MCF 10A (cell line): ENCODE measurements at regions of chr12 and their contacts with region 1.

Region 1: DNA sequence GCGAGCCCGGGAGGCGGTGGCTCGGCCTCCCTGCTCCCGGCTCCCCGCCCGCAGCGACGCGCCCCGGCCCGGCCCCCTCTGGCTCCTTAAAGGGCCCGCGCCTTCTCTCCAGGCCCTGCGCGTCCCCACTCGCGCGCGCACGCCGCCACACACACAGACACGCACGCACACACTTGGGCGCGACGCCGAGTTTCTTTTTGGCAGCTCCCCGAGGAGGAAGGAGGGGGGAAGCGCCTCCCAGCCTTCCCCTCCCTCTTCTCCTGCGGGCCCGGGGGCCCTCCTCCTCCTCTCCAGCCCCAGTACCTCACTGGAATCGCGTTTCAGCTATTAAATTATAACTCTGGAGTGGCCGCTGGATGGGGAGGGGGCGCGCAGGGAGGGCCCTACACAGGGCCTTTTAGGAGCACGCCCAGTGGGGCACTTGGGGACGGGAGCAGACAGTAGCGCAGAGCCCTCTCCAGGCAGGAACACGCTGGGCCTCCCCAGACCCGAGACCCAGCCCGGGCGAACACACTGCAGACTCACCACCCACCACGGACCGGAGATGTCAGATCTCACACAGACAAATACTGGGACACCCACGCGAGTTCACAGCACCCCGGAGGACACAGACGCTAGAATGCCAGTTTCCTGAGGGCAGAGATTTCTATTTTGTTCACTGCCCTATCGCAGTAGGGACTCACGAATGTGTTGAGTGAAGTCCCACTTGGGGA is 405 bp upstream of the NCOR2 start:
- DNase-seq: peak; percentile 79
- H3K4me3 Mint-ChIP-seq: peak overlapping the region; percentile 72
- H3K27ac Mint-ChIP-seq: no peak overlapping the region
- H3K4me1 Mint-ChIP-seq: peaks cover 6% of the 10 kb centered on the region
- H3K27me3 Mint-ChIP-seq: no peaks in the 10 kb centered on the region
- CTCF ChIP-seq: no peak

Region 2: DNA sequence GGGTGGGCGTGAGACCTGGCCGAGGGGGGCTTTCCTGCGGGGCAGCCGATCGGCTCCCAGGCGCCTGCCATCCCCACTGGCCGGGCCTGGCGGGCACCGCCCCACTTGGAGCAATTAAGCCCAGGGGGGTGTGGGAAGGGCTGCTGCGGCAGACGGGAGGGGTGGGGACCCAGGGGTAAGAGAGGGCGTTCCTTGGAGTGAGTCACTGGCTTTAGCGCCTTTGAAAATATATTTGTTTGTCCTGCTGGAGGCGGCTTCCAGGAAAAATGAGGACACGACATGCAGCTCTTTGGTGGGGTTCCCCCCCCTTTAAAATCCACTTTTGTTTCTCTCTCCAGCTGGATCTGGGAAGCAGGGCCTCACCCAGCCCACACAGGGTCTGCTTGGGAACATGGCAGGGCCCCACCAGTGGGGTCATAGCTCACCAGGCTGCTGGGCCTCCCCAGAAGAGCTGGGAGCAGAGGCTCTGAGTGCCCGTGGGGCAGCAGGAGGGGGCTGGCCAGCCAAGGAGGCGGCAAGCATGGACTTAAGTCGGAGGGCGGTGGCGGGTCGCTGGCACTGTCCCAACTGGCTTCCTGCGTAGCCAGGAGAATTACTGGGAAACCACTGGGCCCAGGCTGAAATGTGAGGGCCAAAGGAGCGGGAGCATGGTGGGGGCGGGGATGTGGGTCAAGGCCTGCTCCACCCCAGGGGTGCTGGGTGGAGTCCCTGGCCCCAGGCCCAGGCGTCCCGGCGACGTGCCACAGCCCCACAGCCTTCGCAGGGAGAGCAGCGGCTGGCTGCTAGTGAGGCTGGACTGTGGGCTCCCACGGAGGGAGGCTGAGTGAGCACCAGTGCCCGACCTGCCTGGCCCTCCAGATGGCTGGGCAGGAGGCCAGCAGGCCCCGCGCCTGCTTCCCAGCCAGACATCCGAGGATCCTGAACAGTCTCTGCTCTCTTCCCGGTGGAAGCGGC is 145.0 kb before region 1 on chr12:
- CTCF ChIA-PET with region 1: no interaction called
- POLR2A ChIA-PET with region 1: no interaction called
- intact Hi-C with region 1: loop called (anchors 1 kb)
- DNase-seq: peak; percentile 92
- H3K4me3 Mint-ChIP-seq: peak overlapping the region; percentile 48
- H3K27ac Mint-ChIP-seq: peak overlapping the region; percentile 49
- H3K4me1 Mint-ChIP-seq: peaks cover 18% of the 10 kb centered on the region
- H3K27me3 Mint-ChIP-seq: no peaks in the 10 kb centered on the region
- CTCF ChIP-seq: no peak

Region 3: GRCh38 chr12:124480469-124481256 is 87.2 kb before region 1 on chr12:
- CTCF ChIA-PET with region 1: no interaction called
- POLR2A ChIA-PET with region 1: no interaction called
- intact Hi-C with region 1: no loop called
- DNase-seq: peak; percentile 84
- H3K4me3 Mint-ChIP-seq: peak overlapping the region; percentile 8
- H3K27ac Mint-ChIP-seq: no peak overlapping the region
- H3K4me1 Mint-ChIP-seq: peaks cover 24% of the 10 kb centered on the region
- H3K27me3 Mint-ChIP-seq: no peaks in the 10 kb centered on the region
- CTCF ChIP-seq: no peak